CD4-positive, alpha-beta memory T cell (primary cell): ENCODE measurements at regions of chr11 and their contacts with region 1.

Region 1: GRCh38 chr11:8688414-8689362 is 6.1 kb downstream of the RPL27A start:
- DNase-seq: peak; percentile 60 to 82 (median 68)
- H3K4me3 ChIP-seq: peak overlapping the region; percentile 86 to 96
- H3K4me3 Mint-ChIP-seq: peak overlapping the region; percentile 94 to 98 (median 97)
- H3K27ac ChIP-seq: peak overlapping the region; percentile 74
- H3K27ac Mint-ChIP-seq: peak overlapping the region; percentile 95 to 99 (median 97)
- H3K4me1 ChIP-seq: peaks cover 36% of the 10 kb centered on the region
- H3K4me1 Mint-ChIP-seq: peaks cover 31 to 57% (median 43%) of the 10 kb centered on the region in 4 donors
- H3K27me3 ChIP-seq: no peaks in the 10 kb centered on the region
- H3K27me3 Mint-ChIP-seq: no peaks in the 10 kb centered on the region

Region 2: DNA sequence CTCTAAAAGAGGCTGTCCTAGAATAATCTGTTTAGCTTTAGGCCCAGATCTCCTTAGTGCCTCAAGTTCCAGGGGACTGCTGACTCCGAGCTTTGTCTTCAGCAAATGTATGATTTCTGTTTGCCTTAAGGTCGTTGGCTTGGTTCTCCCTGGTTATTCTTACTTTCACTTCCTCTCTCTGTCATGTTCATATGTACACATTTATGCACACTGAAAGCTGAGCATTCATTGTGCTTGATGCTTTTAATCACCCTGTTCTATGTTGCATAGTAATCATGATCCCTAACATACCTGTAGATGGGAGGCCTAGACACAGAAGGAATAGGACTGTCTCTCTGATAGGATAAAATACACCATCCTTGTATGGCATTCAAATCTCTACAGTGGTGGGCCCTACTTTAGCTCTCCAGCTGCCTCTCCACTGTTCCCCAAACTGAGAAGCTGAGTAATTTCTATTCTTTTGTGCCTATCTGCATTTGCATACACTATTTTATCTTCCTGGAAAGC is 1167.7 kb before region 1 on chr11:
- CTCF ChIA-PET with region 1: no interaction called
- POLR2A ChIA-PET with region 1: no interaction called
- intact Hi-C with region 1: loop called (anchors 10 kb)
- DNase-seq: no peak
- H3K4me3 ChIP-seq: no peak overlapping the region
- H3K4me3 Mint-ChIP-seq: no peak overlapping the region
- H3K27ac ChIP-seq: no peak overlapping the region
- H3K27ac Mint-ChIP-seq: no peak overlapping the region
- H3K4me1 ChIP-seq: peaks cover 47% of the 10 kb centered on the region
- H3K4me1 Mint-ChIP-seq: peaks cover 23 to 67% (median 28%) of the 10 kb centered on the region in 4 donors
- H3K27me3 ChIP-seq: no peaks in the 10 kb centered on the region
- H3K27me3 Mint-ChIP-seq: no peaks in the 10 kb centered on the region

Region 3: GRCh38 chr11:8018484-8019313 is 670.0 kb before region 1 on chr11:
- CTCF ChIA-PET with region 1: no interaction called
- POLR2A ChIA-PET with region 1: no interaction called
- intact Hi-C with region 1: loop called (anchors 10 kb)
- DNase-seq: peak; percentile 86 to 91 (median 89)
- H3K4me3 ChIP-seq: peak overlapping the region; percentile 23 to 74
- H3K4me3 Mint-ChIP-seq: peak overlapping the region; percentile 79 to 87 (median 84)
- H3K27ac ChIP-seq: peak overlapping the region; percentile 61
- H3K27ac Mint-ChIP-seq: peak overlapping the region; percentile 87 to 98 (median 93)
- H3K4me1 ChIP-seq: peaks cover 14% of the 10 kb centered on the region
- H3K4me1 Mint-ChIP-seq: peaks cover 10 to 20% (median 14%) of the 10 kb centered on the region in 4 donors
- H3K27me3 ChIP-seq: no peaks in the 10 kb centered on the region
- H3K27me3 Mint-ChIP-seq: peaks cover 15 to 20% of the 10 kb centered on the region in 2 donors

Region 4: GRCh38 chr11:8754241-8754640 is 65.6 kb after region 1 on chr11:
- CTCF ChIA-PET with region 1: no interaction called
- POLR2A ChIA-PET with region 1: no interaction called
- intact Hi-C with region 1: no loop called
- DNase-seq: no peak
- H3K4me3 ChIP-seq: no peak overlapping the region
- H3K4me3 Mint-ChIP-seq: no peak overlapping the region
- H3K27ac ChIP-seq: no peak overlapping the region
- H3K27ac Mint-ChIP-seq: no peak overlapping the region
- H3K4me1 ChIP-seq: no peaks in the 10 kb centered on the region
- H3K4me1 Mint-ChIP-seq: no peaks in the 10 kb centered on the region
- H3K27me3 ChIP-seq: peaks cover 5% of the 10 kb centered on the region
- H3K27me3 Mint-ChIP-seq: peaks cover 1 to 9% of the 10 kb centered on the region in 2 donors